Activated CD4-positive, alpha-beta T cell treated with anti-CD3 and anti-CD28 coated beads for 36 hours (primary cell): ENCODE measurements at regions of chr17 and their contacts with region 1.

Region 1: DNA sequence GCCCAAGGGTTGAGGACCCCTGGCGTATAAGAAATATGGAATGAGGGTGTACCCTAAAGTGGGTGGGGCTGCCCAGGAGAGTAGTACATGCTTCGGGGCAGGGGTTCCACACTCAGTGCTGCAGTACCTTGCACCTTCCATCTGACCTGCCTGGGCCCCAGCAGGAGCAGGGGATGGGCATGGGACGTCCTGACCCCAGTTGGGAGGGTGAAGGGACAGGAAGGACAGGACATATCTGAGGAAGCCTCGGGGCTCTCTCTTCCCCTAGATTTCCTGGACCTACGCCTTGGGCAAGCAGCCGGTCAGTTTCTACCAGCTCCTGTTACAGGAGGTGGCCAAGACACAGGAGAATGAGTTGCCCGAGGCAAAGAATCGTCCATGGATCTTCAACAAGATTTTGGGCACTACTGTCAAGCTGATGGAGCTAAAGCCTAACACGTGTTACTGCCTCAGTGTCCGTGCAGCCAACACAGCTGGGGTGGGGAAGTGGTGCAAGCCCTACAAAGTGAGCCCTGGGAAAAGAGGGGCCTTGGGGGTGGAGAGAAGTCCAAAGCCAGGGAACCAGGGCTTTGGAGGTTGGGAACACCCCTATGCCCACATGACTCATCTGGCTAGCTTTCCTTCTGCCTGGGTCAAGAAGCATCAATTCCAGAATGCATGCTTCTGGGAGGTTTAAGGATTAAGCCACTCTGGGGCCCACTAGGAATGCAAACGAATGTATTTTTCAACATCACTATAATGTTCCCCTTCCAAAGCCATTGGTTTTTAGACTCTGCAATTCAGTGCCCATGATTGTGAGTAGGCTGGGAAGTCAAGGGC is 7.9 kb downstream of the FNDC8 start:
- DNase-seq: no peak
- ATAC-seq: no peak
- H3K4me3 Mint-ChIP-seq: no peak overlapping the region
- H3K27ac Mint-ChIP-seq: no peak overlapping the region
- H3K4me1 Mint-ChIP-seq: no peaks in the 10 kb centered on the region
- H3K27me3 Mint-ChIP-seq: no peaks in the 10 kb centered on the region

Region 2: GRCh38 chr17:35082073-35082657 is 47.2 kb before region 1 on chr17:
- CTCF ChIA-PET with region 1: interaction called, 3 read pairs
- POLR2A ChIA-PET with region 1: interaction called, 10 read pairs
- intact Hi-C with region 1: no loop called
- DNase-seq: no peak
- ATAC-seq: peak; percentile 57
- H3K4me3 Mint-ChIP-seq: peak overlapping the region; percentile 1
- H3K27ac Mint-ChIP-seq: peak overlapping the region; percentile 93
- H3K4me1 Mint-ChIP-seq: peaks cover 83% of the 10 kb centered on the region
- H3K27me3 Mint-ChIP-seq: no peaks in the 10 kb centered on the region